ENCODE measurements at regions of chr1 and their contacts with region 1.

Region 1: GRCh38 chr1:54581621-54582035 is 33.6 kb downstream of the ACOT11 start:
- DNase-seq: no peak
- ATAC-seq: no peak
- H3K4me3 ChIP-seq: no peak overlapping the region
- H3K4me3 Mint-ChIP-seq: no peak overlapping the region
- H3K27ac ChIP-seq: no peak overlapping the region
- H3K27ac Mint-ChIP-seq: no peak overlapping the region
- H3K4me1 ChIP-seq: no peaks in the 10 kb centered on the region
- H3K4me1 Mint-ChIP-seq: no peaks in the 10 kb centered on the region
- H3K27me3 ChIP-seq: no peaks in the 10 kb centered on the region
- H3K27me3 Mint-ChIP-seq: no peaks in the 10 kb centered on the region
- CTCF ChIP-seq: no peak

Region 2: DNA sequence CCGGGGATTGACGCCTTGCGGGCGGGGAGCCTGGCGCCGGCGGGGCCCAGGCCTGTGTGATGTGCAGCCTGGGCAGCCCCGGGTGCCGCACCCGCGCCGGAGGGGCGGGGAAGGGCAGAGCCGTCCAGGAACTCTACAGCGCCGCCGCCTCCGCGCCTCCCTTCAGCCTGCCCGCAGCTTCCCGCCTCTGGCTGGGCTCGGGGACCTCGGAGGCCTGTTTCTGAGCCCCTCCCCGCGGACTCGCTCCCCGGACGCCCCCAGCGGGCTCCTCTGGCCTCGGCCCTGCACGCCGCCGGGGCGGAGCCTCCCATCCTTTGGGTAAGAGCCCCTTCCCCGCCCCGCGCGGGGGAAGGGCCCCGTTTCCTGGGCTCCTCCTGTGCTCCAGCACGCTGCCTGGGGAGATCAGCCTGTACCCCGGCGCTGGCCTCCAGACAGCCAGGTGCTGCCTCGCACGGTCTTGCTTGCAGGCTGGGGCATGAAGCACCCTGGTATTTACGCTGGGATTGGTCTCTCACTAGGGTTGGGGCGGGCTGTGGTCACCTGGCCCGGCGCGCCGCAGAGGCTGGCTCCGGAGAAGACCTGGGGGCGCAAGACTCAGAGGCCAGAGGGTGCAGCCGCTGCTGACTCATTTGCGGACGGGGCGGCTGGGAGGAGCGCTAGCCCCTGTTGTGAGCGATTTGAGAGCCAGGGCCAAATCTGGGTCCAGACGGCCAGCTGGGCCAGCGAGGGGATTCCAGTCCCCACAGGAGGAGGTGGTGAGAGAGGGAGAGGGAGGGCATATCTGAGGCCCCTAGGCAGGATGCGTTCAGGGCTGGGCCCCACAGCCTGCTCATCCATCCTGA is 39.3 kb before region 1 on chr1:
- CTCF ChIA-PET with region 1: no interaction called
- POLR2A ChIA-PET with region 1: no interaction called
- intact Hi-C with region 1: loop called in 1 of 2 experiments (anchors 5 kb)
- DNase-seq: peak; percentile 8 to 74 (median 43)
- ATAC-seq: peak; percentile 84
- H3K4me3 ChIP-seq: peak overlapping the region; percentile 56 to 68
- H3K4me3 Mint-ChIP-seq: peak overlapping the region; percentile 81
- H3K27ac ChIP-seq: no peak overlapping the region
- H3K27ac Mint-ChIP-seq: no peak overlapping the region
- H3K4me1 ChIP-seq: peaks cover 10% of the 10 kb centered on the region
- H3K4me1 Mint-ChIP-seq: peaks cover 15% of the 10 kb centered on the region
- H3K27me3 ChIP-seq: no peaks in the 10 kb centered on the region
- H3K27me3 Mint-ChIP-seq: peaks cover 2% of the 10 kb centered on the region
- CTCF ChIP-seq: no peak

Region 3: DNA sequence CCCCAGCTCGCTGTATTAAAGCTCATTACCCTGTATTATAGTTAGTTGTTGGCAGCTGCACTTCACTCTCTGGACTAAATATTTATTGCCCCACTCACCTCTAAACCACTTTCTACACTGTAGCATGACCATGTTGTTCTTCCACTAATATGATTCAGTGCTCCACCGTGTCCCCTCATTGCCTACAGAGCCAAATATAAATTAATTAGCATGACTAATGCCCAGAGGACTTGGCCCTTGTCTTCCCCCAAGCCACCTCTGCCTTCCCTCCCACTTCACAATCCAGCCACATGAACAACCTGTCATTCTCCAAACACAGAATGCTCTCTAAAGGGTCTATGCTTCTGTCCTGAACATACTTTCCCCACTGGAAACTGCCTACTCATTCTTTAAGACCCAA is 1721.2 kb after region 1 on chr1:
- CTCF ChIA-PET with region 1: no interaction called
- POLR2A ChIA-PET with region 1: no interaction called
- intact Hi-C with region 1: no loop called
- DNase-seq: no peak
- ATAC-seq: no peak
- H3K4me3 ChIP-seq: no peak overlapping the region
- H3K4me3 Mint-ChIP-seq: no peak overlapping the region
- H3K27ac ChIP-seq: no peak overlapping the region
- H3K27ac Mint-ChIP-seq: no peak overlapping the region
- H3K4me1 ChIP-seq: no peaks in the 10 kb centered on the region
- H3K4me1 Mint-ChIP-seq: no peaks in the 10 kb centered on the region
- H3K27me3 ChIP-seq: no peaks in the 10 kb centered on the region
- H3K27me3 Mint-ChIP-seq: peaks cover 2% of the 10 kb centered on the region
- CTCF ChIP-seq: no peak